Cardiac septum (tissue), 1 donor: ENCODE measurements at regions of chr19 and their contacts with region 1.

Region 1: GRCh38 chr19:28710278-28710677 is 502.7 kb downstream of the UQCRFS1 start:
- DNase-seq: no peak

Region 2: GRCh38 chr19:27974082-27974513 is 736.2 kb before region 1 on chr19:
- intact Hi-C with region 1: loop called (anchors 10 kb)
- DNase-seq: no peak

Region 3: DNA sequence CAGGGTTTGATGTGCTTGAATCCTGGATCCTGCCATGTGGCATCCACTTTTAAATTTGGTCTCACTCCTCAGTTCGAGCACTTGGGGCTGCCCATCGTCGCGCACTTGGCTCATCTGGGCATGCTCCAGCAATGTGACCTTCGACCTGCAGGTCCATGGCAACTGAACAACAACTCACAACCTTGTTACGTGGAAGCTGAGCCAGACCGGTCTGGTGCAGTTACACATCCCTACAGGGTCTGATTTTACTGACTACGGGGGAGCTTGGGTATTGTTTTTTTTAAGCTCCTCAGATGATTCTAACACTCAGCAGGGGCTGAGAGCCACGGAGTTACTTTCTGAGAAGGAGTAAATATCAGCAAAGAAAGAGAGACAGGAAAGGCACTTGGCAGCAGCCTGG is 266.9 kb before region 1 on chr19:
- intact Hi-C with region 1: no loop called
- DNase-seq: no peak

Region 4: GRCh38 chr19:28466107-28467045 is 243.9 kb before region 1 on chr19:
- intact Hi-C with region 1: loop called (anchors 2 kb)
- DNase-seq: no peak